Mammary epithelial cell (primary cell): ENCODE measurements at regions of chr6 and their contacts with region 1.

Region 1: GRCh38 chr6:52352239-52353008 is 9.5 kb upstream of the PAQR8 start:
- DNase-seq: peak; percentile 96
- H3K4me3 ChIP-seq: no peak overlapping the region
- H3K27ac ChIP-seq: peak overlapping the region; percentile 86
- H3K4me1 ChIP-seq: peaks cover 19% of the 10 kb centered on the region
- H3K27me3 ChIP-seq: no peaks in the 10 kb centered on the region
- CTCF ChIP-seq: no peak

Region 2: DNA sequence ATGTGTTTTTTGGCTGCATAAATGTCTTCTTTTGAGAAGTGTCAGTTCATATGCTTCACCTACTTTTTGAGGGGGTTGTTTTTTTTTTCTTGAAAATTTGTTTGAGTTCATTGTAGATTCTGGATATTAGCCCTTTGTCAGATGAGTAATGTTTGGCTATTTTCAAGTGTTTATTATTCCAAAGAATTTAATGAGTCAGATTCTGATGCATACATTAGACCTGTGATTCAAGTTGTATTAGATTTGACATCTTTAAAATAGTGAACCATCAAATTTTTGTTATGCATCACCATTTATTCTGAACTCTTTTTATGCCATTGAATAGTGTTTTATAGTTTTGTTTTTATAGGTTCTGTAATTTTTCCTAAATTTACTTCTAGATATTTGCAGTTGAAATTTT is 584.3 kb before region 1 on chr6:
- CTCF ChIA-PET with region 1: no interaction called
- dilution Hi-C with region 1: no loop called
- in situ Hi-C with region 1: no loop called
- intact Hi-C with region 1: no loop called
- DNase-seq: no peak
- H3K4me3 ChIP-seq: no peak overlapping the region
- H3K27ac ChIP-seq: no peak overlapping the region
- H3K4me1 ChIP-seq: no peaks in the 10 kb centered on the region
- H3K27me3 ChIP-seq: no peaks in the 10 kb centered on the region
- CTCF ChIP-seq: no peak

Region 3: DNA sequence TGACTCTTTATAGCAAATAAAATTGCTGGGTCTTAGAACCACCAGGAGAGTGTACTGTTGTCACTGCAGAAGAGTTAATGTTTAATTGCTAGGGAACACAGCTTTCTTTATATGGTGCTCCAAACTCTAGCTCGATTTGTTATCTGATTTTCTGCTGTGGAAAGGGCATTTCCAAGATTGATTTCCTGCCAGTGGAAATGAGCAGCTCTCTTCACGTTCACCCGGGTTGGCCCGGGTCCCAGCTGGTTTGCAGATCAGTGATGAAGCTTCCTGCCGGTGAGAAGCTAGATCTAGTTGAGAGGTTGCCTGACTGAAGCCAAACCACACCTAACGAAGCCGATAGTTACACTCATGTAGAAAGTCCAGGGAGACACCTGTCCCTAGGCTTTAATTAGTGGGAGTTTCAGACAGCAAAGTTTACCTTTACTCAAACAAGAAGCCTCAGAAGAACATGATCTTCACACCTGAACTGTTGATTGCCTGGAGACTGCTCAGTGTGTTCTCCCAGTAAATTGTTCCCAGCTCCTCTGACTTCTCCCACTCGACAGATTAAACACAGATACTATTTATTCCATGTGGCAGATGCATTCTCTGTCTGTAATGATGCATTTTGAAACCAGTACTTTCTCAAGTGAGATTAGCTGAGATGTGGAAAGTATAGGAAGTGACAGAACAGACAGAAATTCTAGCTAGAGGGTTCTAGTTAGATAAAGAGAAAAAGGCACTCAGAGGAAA is 37.4 kb after region 1 on chr6:
- CTCF ChIA-PET with region 1: no interaction called
- dilution Hi-C with region 1: loop called (anchors 5 kb)
- in situ Hi-C with region 1: no loop called
- intact Hi-C with region 1: no loop called
- DNase-seq: peak; percentile 72
- H3K4me3 ChIP-seq: no peak overlapping the region
- H3K27ac ChIP-seq: peak overlapping the region; percentile 26
- H3K4me1 ChIP-seq: peaks cover 14% of the 10 kb centered on the region
- H3K27me3 ChIP-seq: no peaks in the 10 kb centered on the region
- CTCF ChIP-seq: no peak